Heart right ventricle (tissue), 16 donors: ENCODE measurements at regions of chr12 and their contacts with region 1.

Region 1: GRCh38 chr12:42490261-42490842 is 99.2 kb downstream of the PRICKLE1 start:
- DNase-seq: no peak
- ATAC-seq: no peak
- H3K4me3 ChIP-seq: no peak overlapping the region
- H3K27ac ChIP-seq: no peak overlapping the region
- H3K4me1 ChIP-seq: peaks cover 0 to 24% (median 14%) of the 10 kb centered on the region in 9 donors
- H3K27me3 ChIP-seq: peaks cover 0 to 6% (median 0%) of the 10 kb centered on the region in 7 donors
- CTCF ChIP-seq: no peak

Region 2: GRCh38 chr12:42129595-42130204 is 360.7 kb before region 1 on chr12:
- intact Hi-C with region 1: no loop called
- DNase-seq: peak in 1 of 2 donors; percentile 45
- ATAC-seq: peak; percentile 54 to 84 (median 75)
- H3K4me3 ChIP-seq: no peak overlapping the region
- H3K27ac ChIP-seq: no peak overlapping the region
- H3K4me1 ChIP-seq: peaks cover 4 to 32% (median 20%) of the 10 kb centered on the region in 9 donors
- H3K27me3 ChIP-seq: no peaks in the 10 kb centered on the region
- CTCF ChIP-seq: peak; percentile 69 to 93 (median 83)

Region 3: DNA sequence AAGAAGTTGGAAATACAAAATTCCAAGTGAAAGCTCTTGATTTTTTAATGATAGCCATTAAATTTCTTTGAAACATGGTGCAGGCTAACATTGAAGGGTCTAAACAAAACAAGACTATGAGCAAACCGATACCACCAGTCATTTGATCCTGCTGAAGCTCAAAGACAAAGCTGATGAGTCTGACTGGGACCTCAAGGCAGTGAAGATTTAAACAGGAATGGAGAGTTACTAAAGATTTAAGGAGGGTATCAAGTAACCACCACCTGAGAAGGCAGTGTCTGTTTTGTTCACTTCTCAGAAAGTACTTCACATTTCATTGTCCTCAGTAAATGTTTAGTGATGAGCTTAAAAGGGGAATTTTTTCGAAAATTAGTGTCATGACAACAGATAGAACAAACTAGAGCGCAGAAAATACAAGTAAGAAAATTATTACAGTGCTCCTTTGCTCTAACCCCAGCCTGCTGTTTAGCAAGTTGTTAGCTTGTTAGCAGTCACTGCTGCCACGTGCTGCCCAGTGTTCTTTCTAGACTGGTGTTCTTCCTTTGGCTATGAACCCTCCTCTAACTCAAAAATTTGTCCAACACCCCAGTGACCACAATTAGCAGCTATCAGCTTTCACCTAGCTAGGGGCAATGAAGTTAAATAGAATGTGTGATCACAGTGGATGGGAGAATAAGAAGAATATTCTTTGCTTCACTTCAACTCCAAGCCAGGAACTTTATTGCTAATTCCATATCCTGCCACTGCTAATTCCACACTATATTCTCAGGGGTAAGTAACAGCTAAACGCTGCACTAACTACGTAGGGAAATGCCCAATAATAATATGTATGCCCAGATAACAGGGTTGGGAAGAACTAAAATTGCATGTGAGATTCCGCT is 293.4 kb before region 1 on chr12:
- intact Hi-C with region 1: no loop called
- DNase-seq: no peak
- ATAC-seq: no peak
- H3K4me3 ChIP-seq: no peak overlapping the region
- H3K27ac ChIP-seq: no peak overlapping the region
- H3K4me1 ChIP-seq: peaks cover 0 to 34% (median 13%) of the 10 kb centered on the region in 9 donors
- H3K27me3 ChIP-seq: no peaks in the 10 kb centered on the region
- CTCF ChIP-seq: no peak

Region 4: DNA sequence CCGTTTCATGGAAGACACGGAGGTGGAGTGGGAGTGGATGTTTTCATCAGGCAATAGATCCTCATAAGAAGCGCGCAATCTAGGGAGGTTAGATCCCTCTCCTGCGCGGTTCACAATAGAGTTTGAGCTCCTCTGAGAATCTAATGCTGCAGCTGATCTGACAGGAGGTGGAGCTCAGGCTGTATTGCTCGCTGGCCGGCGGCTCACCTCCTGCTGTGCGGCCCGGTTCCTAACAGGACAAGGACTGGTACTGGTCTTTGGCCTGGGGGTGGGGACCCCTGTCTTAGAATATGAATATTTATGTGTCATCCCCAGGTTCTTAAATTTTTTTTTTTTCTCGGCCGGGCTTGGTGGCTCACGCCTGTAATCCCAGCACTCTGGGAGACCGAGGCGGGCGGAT is 62.5 kb after region 1 on chr12:
- intact Hi-C with region 1: loop called in 2 of 10 experiments (anchors 5 kb)
- DNase-seq: no peak
- ATAC-seq: no peak
- H3K4me3 ChIP-seq: no peak overlapping the region
- H3K27ac ChIP-seq: no peak overlapping the region
- H3K4me1 ChIP-seq: peaks cover 0 to 12% (median 6%) of the 10 kb centered on the region in 9 donors
- H3K27me3 ChIP-seq: peaks cover 0 to 4% (median 0%) of the 10 kb centered on the region in 7 donors
- CTCF ChIP-seq: no peak